IMR-90 (cell line): ENCODE measurements at regions of chr2 and their contacts with region 1.

Region 1: DNA sequence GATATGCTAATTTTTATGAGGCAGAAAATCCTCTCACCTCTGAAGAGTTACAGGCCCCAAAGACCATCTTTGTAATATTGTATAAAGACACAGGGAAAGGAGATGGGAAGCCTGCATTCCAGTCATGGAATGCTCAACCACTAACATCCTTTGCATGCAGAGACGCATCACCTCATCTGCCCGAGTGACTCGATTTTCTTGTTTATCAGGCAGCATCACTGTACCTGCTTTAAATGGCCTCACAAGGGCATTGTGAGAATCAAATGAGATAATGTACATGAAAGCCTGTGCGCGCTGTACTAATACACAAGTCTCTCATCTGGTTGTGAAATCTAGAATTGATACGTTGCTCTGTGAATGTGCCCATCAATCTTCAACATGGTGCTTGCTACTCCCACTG is 10.2 kb upstream of the TMEM247 start:
- DNase-seq: peak; percentile 48
- ATAC-seq: no peak
- H3K4me3 ChIP-seq: no peak overlapping the region
- H3K27ac ChIP-seq: no peak overlapping the region
- H3K4me1 ChIP-seq: no peaks in the 10 kb centered on the region
- H3K27me3 ChIP-seq: no peaks in the 10 kb centered on the region
- CTCF ChIP-seq: no peak
- POLR2A ChIP-seq: no peak
- RAD21 ChIP-seq: no peak

Region 2: DNA sequence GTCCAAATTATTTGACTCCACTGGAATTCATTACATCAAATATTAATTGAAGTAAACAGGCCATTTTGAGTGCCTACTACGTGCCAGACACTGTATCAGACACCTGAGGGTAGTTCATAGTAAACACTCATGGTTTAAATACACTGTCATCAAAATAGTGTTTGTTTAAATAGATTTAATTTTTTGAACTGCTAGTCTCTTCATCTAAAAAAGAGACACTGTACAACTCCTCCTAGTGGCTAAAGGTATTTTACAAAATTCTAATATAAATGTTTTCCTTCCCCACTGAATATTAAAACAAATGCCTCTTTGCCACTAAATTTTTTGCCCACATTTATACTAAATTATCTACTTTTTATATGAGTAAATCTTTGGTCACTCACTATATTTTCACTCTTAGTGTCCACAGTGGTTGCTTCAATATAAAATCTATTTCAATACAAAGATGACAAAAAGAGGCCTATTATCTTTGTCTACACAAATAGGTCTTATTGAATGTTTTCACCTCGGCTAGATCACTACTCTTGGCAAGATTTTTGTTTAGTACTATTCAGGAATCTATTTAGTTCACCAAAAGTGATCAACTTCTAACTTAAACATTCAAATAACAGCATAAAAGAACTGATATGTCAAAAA is 132.3 kb after region 1 on chr2:
- CTCF ChIA-PET with region 1: no interaction called
- POLR2A ChIA-PET with region 1: no interaction called
- dilution Hi-C with region 1: no loop called
- in situ Hi-C with region 1: loop called (anchors 5 kb)
- intact Hi-C with region 1: no loop called
- DNase-seq: peak; percentile 10
- ATAC-seq: no peak
- H3K4me3 ChIP-seq: no peak overlapping the region
- H3K27ac ChIP-seq: no peak overlapping the region
- H3K4me1 ChIP-seq: no peaks in the 10 kb centered on the region
- H3K27me3 ChIP-seq: no peaks in the 10 kb centered on the region
- CTCF ChIP-seq: peak; percentile 51
- POLR2A ChIP-seq: no peak
- RAD21 ChIP-seq: peak; percentile 42

Region 3: DNA sequence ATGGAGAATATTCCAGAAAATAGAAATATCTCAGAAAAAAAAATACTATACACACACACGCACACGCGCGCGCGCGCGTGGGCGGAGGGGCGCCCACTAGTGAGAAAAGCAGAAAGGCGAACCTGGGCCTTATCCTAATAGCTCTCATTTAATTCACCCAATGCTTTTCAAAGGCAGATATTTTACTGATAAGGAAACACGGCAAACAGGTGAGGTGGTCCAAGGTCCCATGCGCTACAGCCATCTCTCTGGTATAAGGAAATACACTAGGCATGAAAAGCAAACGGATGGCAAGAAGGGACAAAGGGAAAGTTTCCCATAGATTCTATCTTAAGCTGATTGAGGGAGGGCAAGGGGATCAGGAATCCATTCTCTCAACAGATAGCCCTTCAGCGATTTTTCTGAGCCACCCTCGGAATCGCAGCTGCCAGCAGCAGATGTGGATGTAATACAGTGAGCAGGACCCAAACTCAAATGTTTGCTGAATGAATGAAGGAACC is 146.9 kb after region 1 on chr2:
- CTCF ChIA-PET with region 1: no interaction called
- POLR2A ChIA-PET with region 1: no interaction called
- dilution Hi-C with region 1: no loop called
- in situ Hi-C with region 1: no loop called
- intact Hi-C with region 1: no loop called
- DNase-seq: peak; percentile 14
- ATAC-seq: no peak
- H3K4me3 ChIP-seq: peak overlapping the region; percentile 88
- H3K27ac ChIP-seq: peak overlapping the region; percentile 71
- H3K4me1 ChIP-seq: no peaks in the 10 kb centered on the region; the same call in 1 of the 2 replicates
- H3K27me3 ChIP-seq: no peaks in the 10 kb centered on the region
- CTCF ChIP-seq: peak; percentile 30; the same call in 1 of the 2 replicates
- POLR2A ChIP-seq: no peak
- RAD21 ChIP-seq: no peak

Region 4: DNA sequence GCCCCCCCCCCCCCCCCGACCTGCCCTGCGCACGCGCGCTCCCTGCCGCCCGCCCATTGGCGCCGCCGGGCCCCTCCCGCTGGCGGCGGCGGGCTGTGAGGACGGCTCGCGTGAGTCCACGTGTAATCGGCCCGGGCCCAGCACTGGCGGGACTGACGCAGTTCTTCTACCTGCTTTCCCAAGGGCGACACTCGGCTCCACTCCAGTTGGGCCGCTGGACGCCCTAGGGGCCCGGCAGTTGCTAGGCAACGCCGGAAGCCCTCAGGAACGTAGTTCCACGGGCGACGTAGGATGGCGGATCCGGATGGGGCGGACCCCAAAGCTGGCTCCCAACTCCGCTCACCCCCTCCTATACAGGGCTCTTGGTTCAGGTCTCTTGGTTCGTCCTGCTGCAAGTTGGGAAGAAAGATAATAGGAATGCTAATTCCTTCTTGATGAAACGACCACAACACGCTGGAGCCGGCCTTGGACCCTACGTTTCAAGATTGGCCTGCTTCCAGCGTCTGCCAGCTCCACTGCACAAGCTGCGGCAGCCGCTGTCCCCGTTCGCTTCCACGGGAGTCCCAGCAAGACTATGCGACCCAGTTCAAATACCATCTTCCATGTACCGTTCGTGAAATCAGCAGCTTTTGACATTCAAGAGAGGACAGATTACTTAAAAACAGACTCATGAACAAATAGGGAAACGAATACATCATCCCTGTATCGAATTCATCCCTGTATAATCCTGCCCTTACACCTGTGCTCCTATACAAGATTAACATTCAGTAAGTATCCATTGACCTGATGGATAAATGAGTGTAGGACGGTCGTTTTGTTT is 446.9 kb after region 1 on chr2:
- CTCF ChIA-PET with region 1: no interaction called
- POLR2A ChIA-PET with region 1: no interaction called
- dilution Hi-C with region 1: no loop called
- in situ Hi-C with region 1: no loop called
- intact Hi-C with region 1: no loop called
- DNase-seq: peak; percentile 91
- ATAC-seq: peak; percentile 82
- H3K4me3 ChIP-seq: peak overlapping the region; percentile 84
- H3K27ac ChIP-seq: peak overlapping the region; percentile 88
- H3K4me1 ChIP-seq: peaks cover 9% of the 10 kb centered on the region
- H3K27me3 ChIP-seq: no peaks in the 10 kb centered on the region
- CTCF ChIP-seq: no peak
- POLR2A ChIP-seq: peak; percentile 39
- RAD21 ChIP-seq: no peak